HepG2 (cell line): ENCODE measurements at regions of chr19 and their contacts with region 1.

Region 1: DNA sequence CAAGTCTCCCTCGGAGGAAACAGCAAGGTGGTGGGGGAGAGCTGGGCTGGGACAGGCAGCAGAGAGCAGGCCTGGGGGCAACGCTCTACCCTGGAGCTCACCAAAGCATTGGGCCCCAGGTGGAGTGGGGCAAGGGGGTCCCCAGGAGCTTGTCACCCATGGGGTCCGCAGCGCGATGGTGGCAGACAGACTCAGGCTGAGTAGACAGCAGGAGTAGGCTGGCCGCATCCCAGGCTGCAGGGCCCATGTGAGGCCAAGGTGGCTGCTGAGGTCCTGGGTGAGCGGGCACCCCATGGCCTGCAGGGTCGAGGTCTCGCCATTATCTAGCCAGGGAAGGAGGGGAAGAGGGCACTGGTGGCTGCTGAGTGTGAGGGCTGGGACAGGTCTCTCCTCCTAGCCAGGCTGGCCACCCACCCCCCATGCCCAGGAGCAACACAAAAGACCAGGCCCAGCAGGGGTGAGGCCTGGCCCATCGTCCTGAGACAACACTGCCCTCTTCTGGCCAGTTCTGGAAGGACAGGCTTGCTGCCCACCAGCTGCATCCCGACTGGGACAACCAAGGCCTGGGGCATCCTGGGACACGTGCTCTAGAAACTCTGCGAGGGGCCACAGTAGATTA is 33.1 kb downstream of the CEBPG start:
- DNase-seq: peak; percentile 56
- ATAC-seq: peak; percentile 31
- H3K4me3 ChIP-seq: no peak overlapping the region
- H3K27ac ChIP-seq: peak overlapping the region; percentile 10
- H3K4me1 ChIP-seq: peaks cover 53% of the 10 kb centered on the region
- H3K27me3 ChIP-seq: no peaks in the 10 kb centered on the region
- CTCF ChIP-seq: peak; percentile 99
- EP300 ChIP-seq: no peak
- POLR2A ChIP-seq: no peak
- RAD21 ChIP-seq: peak; percentile 98

Region 2: DNA sequence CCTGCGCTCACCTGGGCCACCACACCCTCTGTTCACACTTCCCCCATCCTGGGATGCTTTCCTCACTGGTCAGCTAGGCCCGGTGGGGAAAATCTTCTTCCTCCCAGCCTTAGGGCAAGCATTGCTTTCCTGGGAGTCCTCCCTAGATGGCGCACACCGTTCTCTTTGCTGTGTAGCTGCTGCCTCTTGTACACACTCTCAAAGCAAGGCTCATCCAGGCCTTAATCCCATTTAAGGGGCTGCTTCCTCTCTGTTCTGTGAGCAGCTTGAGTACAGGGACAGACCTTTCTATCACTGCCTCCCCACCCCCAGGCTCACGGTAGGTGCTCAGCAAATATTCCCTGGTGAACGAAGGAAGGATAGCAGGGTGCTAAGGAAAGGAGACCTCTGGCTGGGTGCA is 192.0 kb before region 1 on chr19:
- CTCF ChIA-PET with region 1: no interaction called
- POLR2A ChIA-PET with region 1: interaction called, 5 read pairs
- in situ Hi-C with region 1: no loop called
- intact Hi-C with region 1: loop called (anchors 1 kb)
- DNase-seq: peak; percentile 41
- ATAC-seq: peak; percentile 62
- H3K4me3 ChIP-seq: no peak overlapping the region
- H3K27ac ChIP-seq: no peak overlapping the region
- H3K4me1 ChIP-seq: peaks cover 41% of the 10 kb centered on the region
- H3K27me3 ChIP-seq: peaks cover 7 to 18% of the 10 kb centered on the region in 2 experiments; a peak in 4 of 5 replicates
- CTCF ChIP-seq: peak; percentile 73
- EP300 ChIP-seq: no peak
- POLR2A ChIP-seq: no peak
- RAD21 ChIP-seq: no peak

Region 3: GRCh38 chr19:33241530-33242101 is 165.0 kb before region 1 on chr19:
- CTCF ChIA-PET with region 1: interaction called, 20 read pairs
- POLR2A ChIA-PET with region 1: interaction called, 7 read pairs
- in situ Hi-C with region 1: loop called (anchors 5 kb)
- intact Hi-C with region 1: loop called (anchors 1 kb)
- DNase-seq: no peak
- ATAC-seq: peak; percentile 69
- H3K4me3 ChIP-seq: peak overlapping the region in 2 of 3 experiments; percentile 39 to 67; a peak in 5 of 6 replicates
- H3K27ac ChIP-seq: peak overlapping the region; percentile 49
- H3K4me1 ChIP-seq: peaks cover 46% of the 10 kb centered on the region
- H3K27me3 ChIP-seq: no peaks in the 10 kb centered on the region
- CTCF ChIP-seq: peak; percentile 98
- EP300 ChIP-seq: no peak
- POLR2A ChIP-seq: no peak
- RAD21 ChIP-seq: peak; percentile 98

Region 4: DNA sequence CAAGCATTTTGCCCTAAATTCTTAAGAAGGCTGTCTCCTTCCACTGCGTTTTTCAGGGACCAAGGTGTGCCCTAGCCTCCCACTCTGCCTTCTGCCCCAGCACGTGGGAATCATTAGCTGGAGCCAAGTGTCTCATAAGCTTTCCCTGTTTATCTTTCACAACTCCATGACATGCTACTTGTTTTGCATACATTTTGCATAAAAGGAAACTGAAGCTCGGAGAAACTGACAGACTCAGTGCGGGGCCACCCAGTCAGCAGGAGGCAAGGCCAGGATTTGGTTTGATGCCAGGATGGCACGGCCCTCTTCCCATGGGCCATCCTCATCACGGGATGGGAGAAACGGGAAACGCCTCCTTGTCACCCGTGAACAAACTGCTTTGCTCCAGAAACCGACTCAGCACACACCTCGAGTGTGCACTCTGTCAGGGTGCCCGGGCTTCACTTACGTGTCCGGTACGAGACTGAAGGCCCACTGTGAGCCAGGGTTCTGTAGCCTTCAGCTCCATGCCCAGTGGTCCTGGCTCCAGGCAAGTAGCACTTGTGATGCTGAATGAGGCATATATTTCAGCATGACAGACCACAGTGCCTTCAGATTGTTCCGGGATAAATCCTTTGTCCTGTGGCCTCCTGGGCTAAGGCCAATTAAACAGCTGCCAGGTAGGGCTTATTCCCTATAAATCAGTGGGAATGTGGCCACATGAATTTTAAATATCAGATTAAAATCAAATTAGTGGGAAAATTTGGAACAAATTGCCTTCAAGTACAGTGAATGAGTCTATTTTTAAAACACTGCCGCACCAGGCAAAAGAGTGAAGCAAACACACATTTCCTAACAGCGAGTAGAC is 113.8 kb before region 1 on chr19:
- CTCF ChIA-PET with region 1: interaction called, 3 read pairs
- POLR2A ChIA-PET with region 1: interaction called, 24 read pairs
- in situ Hi-C with region 1: no loop called
- intact Hi-C with region 1: no loop called
- DNase-seq: no peak
- ATAC-seq: peak; percentile 4; the same call in 2 of the 3 replicates
- H3K4me3 ChIP-seq: peak overlapping the region; percentile 39 to 69 (median 41); a peak in 5 of 6 replicates
- H3K27ac ChIP-seq: peak overlapping the region; percentile 91
- H3K4me1 ChIP-seq: peaks cover 93% of the 10 kb centered on the region
- H3K27me3 ChIP-seq: no peaks in the 10 kb centered on the region
- CTCF ChIP-seq: no peak
- EP300 ChIP-seq: no peak
- POLR2A ChIP-seq: no peak
- RAD21 ChIP-seq: no peak

Region 5: DNA sequence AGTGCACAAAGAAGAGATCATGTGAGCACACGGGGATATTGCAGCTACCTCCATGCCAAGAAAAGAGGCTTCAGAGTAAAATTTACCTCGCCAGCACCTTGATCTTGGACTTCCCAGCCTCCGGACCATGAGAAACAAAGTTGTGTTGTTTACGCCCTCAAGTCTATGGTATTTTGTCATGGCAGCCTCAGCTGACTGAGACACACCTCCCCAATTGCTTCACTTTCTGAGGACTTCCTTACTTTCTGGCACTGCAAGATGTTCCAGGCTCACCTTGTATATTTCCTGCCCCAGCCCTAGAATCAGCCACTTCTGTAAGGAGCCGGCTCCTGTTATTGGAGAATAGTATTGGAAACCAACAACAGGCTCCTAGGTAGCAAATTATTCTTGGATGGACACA is 39.7 kb before region 1 on chr19:
- CTCF ChIA-PET with region 1: no interaction called
- POLR2A ChIA-PET with region 1: no interaction called
- in situ Hi-C with region 1: no loop called
- intact Hi-C with region 1: no loop called
- DNase-seq: no peak
- ATAC-seq: no peak
- H3K4me3 ChIP-seq: no peak overlapping the region
- H3K27ac ChIP-seq: no peak overlapping the region
- H3K4me1 ChIP-seq: peaks cover 11% of the 10 kb centered on the region
- H3K27me3 ChIP-seq: no peaks in the 10 kb centered on the region; a peak in 1 of 5 replicates
- CTCF ChIP-seq: no peak
- EP300 ChIP-seq: no peak
- POLR2A ChIP-seq: no peak
- RAD21 ChIP-seq: no peak

Region 6: GRCh38 chr19:33394006-33394849 is 12.4 kb before region 1 on chr19:
- CTCF ChIA-PET with region 1: interaction called, 3 read pairs
- POLR2A ChIA-PET with region 1: interaction called, 58 read pairs
- in situ Hi-C with region 1: no loop called
- intact Hi-C with region 1: no loop called
- DNase-seq: peak; percentile 55
- ATAC-seq: peak; percentile 5
- H3K4me3 ChIP-seq: peak overlapping the region; percentile 15 to 64 (median 33); a peak in 4 of 6 replicates
- H3K27ac ChIP-seq: peak overlapping the region; percentile 94
- H3K4me1 ChIP-seq: peaks cover 95% of the 10 kb centered on the region
- H3K27me3 ChIP-seq: no peaks in the 10 kb centered on the region
- CTCF ChIP-seq: no peak
- EP300 ChIP-seq: no peak; a peak in 1 of 4 replicates
- POLR2A ChIP-seq: peak; percentile 36 to 44; a peak in 1 of 4 replicates
- RAD21 ChIP-seq: peak; percentile 45; the same call in 1 of the 2 replicates

Region 7: DNA sequence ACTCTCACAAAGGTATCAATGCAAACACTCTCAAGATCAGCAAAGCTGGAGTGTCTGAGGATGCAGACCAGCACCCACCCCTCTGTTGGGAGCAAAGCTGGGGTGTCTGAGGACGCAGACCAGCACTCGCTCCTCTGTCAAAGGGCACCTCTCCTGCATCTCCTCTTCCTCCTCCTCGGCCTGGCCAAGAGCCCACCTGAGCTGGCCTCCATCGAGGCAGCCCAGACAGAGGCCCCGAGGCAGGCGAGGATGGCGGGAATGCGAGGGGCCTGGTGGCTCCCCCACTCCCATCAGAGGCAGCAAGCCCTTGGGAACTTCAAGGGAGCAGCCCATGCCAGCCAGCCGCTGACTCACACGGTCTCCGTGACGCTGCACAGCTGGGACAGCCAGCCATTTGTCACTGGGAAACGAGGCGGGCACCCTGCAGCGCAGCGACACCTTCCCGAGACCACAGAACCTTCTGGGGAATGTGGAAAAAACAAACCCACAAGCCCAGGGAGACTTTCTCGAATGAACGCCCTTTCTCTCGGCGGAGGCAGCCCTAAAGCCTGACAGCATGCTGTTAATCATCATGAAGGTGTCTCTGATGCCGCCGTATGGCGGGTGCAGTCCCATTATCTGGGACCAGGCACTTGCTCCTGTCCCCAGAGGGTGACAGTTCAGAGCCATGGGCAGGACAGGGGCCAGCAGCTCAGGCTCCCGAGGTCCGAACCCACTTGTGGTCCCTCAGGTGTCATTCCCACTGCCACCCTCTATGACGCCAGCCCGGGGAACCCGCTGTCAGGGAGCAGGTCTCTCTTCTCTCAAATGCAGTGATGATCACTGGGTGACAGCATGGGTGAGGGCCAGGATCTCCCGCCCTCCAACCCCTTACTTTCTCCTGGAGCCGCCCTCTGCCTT is 61.9 kb after region 1 on chr19:
- CTCF ChIA-PET with region 1: no interaction called
- POLR2A ChIA-PET with region 1: no interaction called
- in situ Hi-C with region 1: no loop called
- intact Hi-C with region 1: no loop called
- DNase-seq: no peak
- ATAC-seq: no peak; the same call in 2 of the 3 replicates
- H3K4me3 ChIP-seq: no peak overlapping the region
- H3K27ac ChIP-seq: no peak overlapping the region
- H3K4me1 ChIP-seq: no peaks in the 10 kb centered on the region
- H3K27me3 ChIP-seq: no peaks in the 10 kb centered on the region
- CTCF ChIP-seq: no peak
- EP300 ChIP-seq: no peak
- POLR2A ChIP-seq: no peak
- RAD21 ChIP-seq: no peak

Region 8: GRCh38 chr19:33752018-33752800 is 345.6 kb after region 1 on chr19:
- CTCF ChIA-PET with region 1: no interaction called
- POLR2A ChIA-PET with region 1: no interaction called
- in situ Hi-C with region 1: no loop called
- intact Hi-C with region 1: no loop called
- DNase-seq: no peak
- ATAC-seq: peak; percentile 56
- H3K4me3 ChIP-seq: no peak overlapping the region
- H3K27ac ChIP-seq: no peak overlapping the region
- H3K4me1 ChIP-seq: no peaks in the 10 kb centered on the region
- H3K27me3 ChIP-seq: peaks cover 2 to 41% of the 10 kb centered on the region in 2 experiments; a peak in 4 of 5 replicates
- CTCF ChIP-seq: peak; percentile 33; the same call in 1 of the 2 replicates
- EP300 ChIP-seq: no peak
- POLR2A ChIP-seq: no peak
- RAD21 ChIP-seq: no peak